PC-3 (cell line): ENCODE measurements at regions of chr10 and their contacts with region 1.

Region 1: GRCh38 chr10:4849555-4850242 is 23.7 kb downstream of the AKR1E2 start:
- DNase-seq: peak; percentile 88
- ATAC-seq: peak; percentile 73
- H3K4me3 ChIP-seq: no peak overlapping the region
- H3K27ac ChIP-seq: no peak overlapping the region
- H3K4me1 ChIP-seq: peaks cover 11% of the 10 kb centered on the region; the same call in 1 of the 2 replicates
- H3K27me3 ChIP-seq: no peaks in the 10 kb centered on the region
- CTCF ChIP-seq: peak; percentile 97

Region 2: DNA sequence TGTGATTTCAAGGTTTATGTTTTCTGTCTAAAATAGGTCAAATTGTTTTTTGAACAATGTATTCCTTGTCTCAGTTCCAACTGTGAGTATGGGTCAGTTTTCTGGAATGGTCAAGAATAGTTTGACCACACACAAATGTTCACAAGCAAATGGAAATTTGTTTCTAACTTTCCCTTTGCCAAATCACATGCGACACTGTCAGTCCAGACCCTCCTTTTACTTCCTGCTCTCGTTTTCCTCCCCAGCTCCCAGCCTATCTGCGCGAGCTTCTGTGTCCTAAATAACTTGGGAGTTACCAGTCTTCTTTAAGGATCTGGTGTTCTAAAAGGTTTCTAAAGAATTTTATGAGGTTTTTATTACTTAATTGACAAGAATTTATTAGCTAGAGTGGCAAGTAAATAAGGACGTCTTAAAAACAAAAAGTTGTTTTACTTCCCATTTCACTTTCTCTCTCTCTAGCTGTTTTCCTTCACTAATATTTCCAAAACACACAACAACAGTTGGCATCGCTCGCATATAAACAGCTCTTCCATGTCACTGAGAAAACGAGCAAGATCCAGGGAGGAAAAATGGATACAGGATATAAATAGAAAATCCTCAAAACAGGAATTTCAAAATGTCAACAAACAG is 798.6 kb before region 1 on chr10:
- CTCF ChIA-PET with region 1: no interaction called
- POLR2A ChIA-PET with region 1: no interaction called
- intact Hi-C with region 1: no loop called
- DNase-seq: no peak
- ATAC-seq: no peak
- H3K4me3 ChIP-seq: no peak overlapping the region
- H3K27ac ChIP-seq: no peak overlapping the region
- H3K4me1 ChIP-seq: no peaks in the 10 kb centered on the region
- H3K27me3 ChIP-seq: no peaks in the 10 kb centered on the region
- CTCF ChIP-seq: no peak

Region 3: GRCh38 chr10:4784667-4785333 is 64.9 kb before region 1 on chr10:
- CTCF ChIA-PET with region 1: no interaction called
- POLR2A ChIA-PET with region 1: no interaction called
- intact Hi-C with region 1: no loop called
- DNase-seq: no peak
- ATAC-seq: no peak
- H3K4me3 ChIP-seq: no peak overlapping the region
- H3K27ac ChIP-seq: no peak overlapping the region
- H3K4me1 ChIP-seq: peaks cover 4% of the 10 kb centered on the region; the same call in 1 of the 2 replicates
- H3K27me3 ChIP-seq: no peaks in the 10 kb centered on the region
- CTCF ChIP-seq: no peak

Region 4: DNA sequence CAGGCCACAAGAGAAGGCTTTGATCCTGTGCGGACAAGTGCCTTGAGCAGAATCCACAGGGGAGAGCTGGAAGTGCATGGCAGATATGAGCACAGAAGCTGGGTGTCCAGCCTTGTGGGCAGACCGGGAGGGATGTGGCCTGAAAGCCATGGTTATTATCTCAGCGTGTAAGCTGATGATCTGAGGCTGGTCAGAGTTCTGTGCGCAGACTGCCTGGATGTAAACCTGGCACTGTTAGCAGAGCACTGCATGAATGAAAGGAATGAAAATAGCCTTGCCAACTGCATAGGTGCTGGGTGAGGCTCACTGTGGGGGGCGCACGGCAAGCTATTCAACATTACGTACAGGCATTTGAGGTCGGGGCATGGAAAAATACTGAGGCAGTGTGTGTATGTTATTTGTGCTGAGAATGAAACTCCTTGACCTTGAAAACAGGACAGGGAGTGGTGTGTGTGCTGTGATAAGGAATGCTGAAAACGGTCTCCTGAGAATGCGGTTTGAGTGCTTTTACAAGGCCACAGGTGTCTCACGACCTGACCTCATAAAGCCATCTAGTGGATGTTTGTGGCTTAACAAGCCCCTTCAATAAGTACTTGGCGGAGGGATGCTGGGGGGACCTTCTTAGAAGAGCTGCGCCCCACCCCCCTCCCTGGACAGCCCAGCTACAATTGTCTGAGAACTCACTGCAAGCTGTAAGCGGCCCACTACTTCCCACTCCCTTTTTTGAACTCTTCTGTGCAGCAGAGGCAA is 132.2 kb after region 1 on chr10:
- CTCF ChIA-PET with region 1: interaction called, 7 read pairs
- POLR2A ChIA-PET with region 1: no interaction called
- intact Hi-C with region 1: loop called (anchors 1 kb)
- DNase-seq: peak; percentile 52
- ATAC-seq: peak; percentile 62
- H3K4me3 ChIP-seq: no peak overlapping the region
- H3K27ac ChIP-seq: no peak overlapping the region
- H3K4me1 ChIP-seq: no peaks in the 10 kb centered on the region
- H3K27me3 ChIP-seq: no peaks in the 10 kb centered on the region
- CTCF ChIP-seq: peak; percentile 52

Region 5: GRCh38 chr10:5094265-5095205 is 244.8 kb after region 1 on chr10 and contains the start of gene AKR1C3:
- CTCF ChIA-PET with region 1: interaction called, 3 read pairs
- POLR2A ChIA-PET with region 1: no interaction called
- intact Hi-C with region 1: loop called (anchors 1 kb)
- DNase-seq: peak; percentile 53
- ATAC-seq: peak; percentile 84
- H3K4me3 ChIP-seq: peak within 1 kb of the TSS; percentile 74
- H3K27ac ChIP-seq: peak within 1 kb of the TSS; percentile 31
- H3K4me1 ChIP-seq: no peaks in the 10 kb centered on the region
- H3K27me3 ChIP-seq: no peaks in the 10 kb centered on the region
- CTCF ChIP-seq: peak; percentile 65
- total RNA-seq, gene AKR1C3: 15.8 and 24.0 TPM in 2 replicates

Region 6: GRCh38 chr10:5385224-5385623 is 535.5 kb after region 1 on chr10:
- CTCF ChIA-PET with region 1: no interaction called
- POLR2A ChIA-PET with region 1: no interaction called
- intact Hi-C with region 1: loop called (anchors 5 kb)
- DNase-seq: no peak
- ATAC-seq: no peak
- H3K4me3 ChIP-seq: no peak overlapping the region
- H3K27ac ChIP-seq: no peak overlapping the region
- H3K4me1 ChIP-seq: no peaks in the 10 kb centered on the region
- H3K27me3 ChIP-seq: no peaks in the 10 kb centered on the region
- CTCF ChIP-seq: no peak